Astrocyte of the cerebellum (primary cell): ENCODE measurements at regions of chr2 and their contacts with region 1.

Region 1: DNA sequence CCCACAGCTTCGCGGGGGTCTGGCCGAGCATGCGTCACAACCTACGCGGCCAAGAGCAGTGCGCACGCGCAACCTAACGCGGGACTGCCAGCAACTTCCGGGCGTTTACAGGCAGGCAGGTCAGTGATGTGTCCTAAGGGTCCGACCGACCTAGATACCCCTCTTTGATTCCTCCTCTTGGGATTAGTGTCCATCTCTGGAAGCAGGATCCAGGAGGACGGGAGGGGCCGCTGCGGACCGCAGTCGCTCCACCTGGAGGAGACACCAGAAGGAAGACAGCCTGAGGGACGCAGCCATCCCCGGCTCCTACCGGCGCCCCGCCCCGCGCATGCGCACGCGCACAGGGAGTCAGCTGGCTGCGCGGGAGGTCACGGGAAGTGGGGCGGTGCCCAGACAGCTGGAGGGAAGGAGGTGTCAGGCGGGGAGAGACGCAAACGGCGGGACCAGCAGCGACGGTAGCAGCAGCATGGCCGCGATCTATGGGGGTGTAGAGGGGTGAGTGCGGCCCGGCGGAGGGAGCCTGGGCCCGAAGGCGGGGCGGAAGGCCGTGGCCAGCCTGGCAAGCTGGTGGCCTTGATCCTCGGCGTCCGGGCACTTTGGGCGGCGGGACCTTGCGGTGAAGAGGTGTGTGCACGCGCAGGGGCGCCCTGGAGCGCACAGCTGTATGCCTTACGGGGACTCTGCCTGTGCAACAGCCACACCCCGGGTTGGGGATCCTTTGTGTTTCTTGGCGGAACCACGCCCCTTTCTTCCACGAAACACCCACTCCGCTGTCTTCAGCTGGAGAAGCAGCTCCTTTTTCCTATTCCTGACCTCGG is at the start of gene NAGK:
- DNase-seq: peak; percentile 91
- H3K4me3 ChIP-seq: peak within 1 kb of the TSS; percentile 98
- CTCF ChIP-seq: no peak

Region 2: GRCh38 chr2:71122387-71123298 is 54.2 kb after region 1 on chr2:
- in situ Hi-C with region 1: loop called (anchors 5 kb)
- DNase-seq: no peak
- H3K4me3 ChIP-seq: no peak overlapping the region
- CTCF ChIP-seq: no peak